SK-N-SH (cell line): ENCODE measurements at regions of chr17 and their contacts with region 1.

Region 1: DNA sequence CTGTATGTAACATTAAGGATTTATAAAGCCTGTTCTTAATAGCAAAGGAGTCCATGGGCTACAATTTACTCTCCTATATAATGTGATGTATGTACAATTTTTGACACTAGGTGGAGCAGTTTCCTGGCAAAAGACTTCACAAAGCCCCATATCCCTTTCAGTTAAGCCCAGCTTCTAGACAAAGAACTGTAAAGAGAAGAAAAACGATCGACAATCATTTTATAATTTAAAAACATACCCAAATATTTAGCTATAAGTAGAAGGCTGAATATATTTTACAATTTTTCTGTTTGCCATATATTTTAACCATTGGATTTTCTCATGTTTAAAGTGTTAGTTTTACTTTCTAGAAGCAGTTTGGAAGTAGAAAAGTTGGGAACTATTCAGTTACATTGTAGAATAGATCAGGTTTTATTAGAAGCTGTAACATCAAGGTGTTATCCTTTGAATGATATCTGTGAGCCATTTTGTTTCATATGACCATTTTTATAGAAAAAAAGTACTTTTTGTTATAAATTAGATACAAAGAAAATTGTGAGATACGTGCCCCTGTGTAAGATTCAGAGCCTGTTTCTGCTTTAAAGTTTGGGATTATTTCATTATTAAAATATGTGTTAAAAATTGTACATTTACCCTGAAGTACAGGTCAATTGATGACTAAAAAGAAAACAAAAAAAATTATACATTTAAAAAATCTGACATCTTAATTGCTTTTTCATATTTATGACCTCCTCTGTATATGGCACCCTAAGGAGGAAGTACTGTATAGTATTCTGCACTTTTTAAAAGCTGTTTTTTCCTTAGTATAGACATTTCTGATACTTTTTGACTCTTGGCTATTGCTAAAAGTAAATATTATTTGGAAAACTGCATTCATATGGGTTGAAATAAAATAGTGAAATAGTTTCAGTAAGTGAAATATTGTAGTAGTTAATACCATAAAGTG is 46.3 kb downstream of the VMP1 start:
- DNase-seq: peak; percentile 78
- H3K4me3 ChIP-seq: peak overlapping the region in 1 of 2 experiments; percentile 40; a peak in 1 of 4 replicates
- H3K27ac ChIP-seq: peak overlapping the region; percentile 91 to 99
- H3K4me1 ChIP-seq: peaks cover 0 to 40% of the 10 kb centered on the region in 2 experiments; a peak in 3 of 4 replicates
- H3K27me3 ChIP-seq: no peaks in the 10 kb centered on the region
- CTCF ChIP-seq: peak; percentile 92
- EP300 ChIP-seq: no peak
- RAD21 ChIP-seq: peak; percentile 98

Region 2: GRCh38 chr17:59521204-59522126 is 232.3 kb before region 1 on chr17:
- CTCF ChIA-PET with region 1: no interaction called
- POLR2A ChIA-PET with region 1: no interaction called
- DNase-seq: peak; percentile 92
- H3K4me3 ChIP-seq: 0 out of 4 replicates have a peak overlapping the region, but pooled peaks of 1 of the 2 experiments have one; percentile 7
- H3K27ac ChIP-seq: peak overlapping the region in 1 of 2 experiments; percentile 70; a peak in 2 of 4 replicates
- H3K4me1 ChIP-seq: peaks cover 0 to 3% of the 10 kb centered on the region in 2 experiments; a peak in 2 of 4 replicates
- H3K27me3 ChIP-seq: no peaks in the 10 kb centered on the region
- CTCF ChIP-seq: peak; percentile 98
- EP300 ChIP-seq: peak in 1 of 2 experiments; percentile 49; a peak in 1 of 4 replicates
- RAD21 ChIP-seq: peak; percentile 98

Region 3: GRCh38 chr17:59699786-59700185 is 54.0 kb before region 1 on chr17:
- CTCF ChIA-PET with region 1: no interaction called
- POLR2A ChIA-PET with region 1: no interaction called
- DNase-seq: no peak
- H3K4me3 ChIP-seq: no peak overlapping the region
- H3K27ac ChIP-seq: no peak overlapping the region; a peak in 1 of 4 replicates
- H3K4me1 ChIP-seq: peaks cover 0 to 9% of the 10 kb centered on the region in 2 experiments; a peak in 2 of 4 replicates
- H3K27me3 ChIP-seq: no peaks in the 10 kb centered on the region
- CTCF ChIP-seq: no peak
- EP300 ChIP-seq: no peak
- RAD21 ChIP-seq: no peak

Region 4: DNA sequence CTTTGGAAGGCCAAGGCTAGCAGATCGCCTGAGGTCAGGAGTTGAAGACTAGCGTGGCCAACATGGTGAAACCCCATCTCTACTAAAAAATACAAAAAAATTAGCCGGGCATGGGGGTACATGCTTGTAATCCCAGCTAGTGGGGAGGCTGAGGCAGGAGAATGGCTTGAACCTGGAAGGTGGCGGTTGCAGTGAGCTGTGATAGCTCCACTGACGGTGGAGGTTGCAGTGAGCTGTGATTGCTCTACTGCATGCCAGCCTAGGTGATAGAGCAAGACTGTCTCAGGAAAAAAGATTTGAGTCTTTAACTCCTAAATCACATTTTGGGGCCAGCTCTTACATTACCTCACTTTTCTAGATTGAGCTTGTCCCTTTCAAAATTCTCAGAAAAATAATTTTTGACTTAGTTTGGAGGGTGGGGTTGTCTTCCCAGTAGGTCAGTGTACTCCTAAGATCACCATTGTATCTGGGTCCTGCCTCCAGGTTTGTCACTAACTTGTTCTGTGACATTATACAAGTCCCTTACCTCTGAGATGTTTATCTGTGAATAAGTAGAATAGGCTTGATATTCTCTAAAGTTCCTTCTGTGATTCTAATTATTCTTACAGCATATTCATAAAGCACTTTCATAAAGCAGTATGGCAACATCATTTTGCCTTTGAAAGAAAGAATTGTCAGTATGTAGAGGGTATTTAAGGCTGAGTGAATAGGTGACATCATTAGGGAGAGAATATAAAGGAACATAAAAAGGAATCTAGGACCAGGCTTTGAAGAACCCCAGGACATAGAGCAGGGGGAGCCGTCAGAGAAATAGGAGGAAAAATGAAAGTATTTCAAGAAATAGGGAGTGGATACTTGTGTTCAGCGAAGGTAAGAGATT is 31.0 kb before region 1 on chr17:
- CTCF ChIA-PET with region 1: interaction called, 11 read pairs
- POLR2A ChIA-PET with region 1: interaction called, 3 read pairs
- DNase-seq: no peak
- H3K4me3 ChIP-seq: no peak overlapping the region
- H3K27ac ChIP-seq: no peak overlapping the region
- H3K4me1 ChIP-seq: peaks cover 0 to 11% of the 10 kb centered on the region in 2 experiments; a peak in 1 of 4 replicates
- H3K27me3 ChIP-seq: no peaks in the 10 kb centered on the region
- CTCF ChIP-seq: no peak
- EP300 ChIP-seq: no peak
- RAD21 ChIP-seq: no peak

Region 5: DNA sequence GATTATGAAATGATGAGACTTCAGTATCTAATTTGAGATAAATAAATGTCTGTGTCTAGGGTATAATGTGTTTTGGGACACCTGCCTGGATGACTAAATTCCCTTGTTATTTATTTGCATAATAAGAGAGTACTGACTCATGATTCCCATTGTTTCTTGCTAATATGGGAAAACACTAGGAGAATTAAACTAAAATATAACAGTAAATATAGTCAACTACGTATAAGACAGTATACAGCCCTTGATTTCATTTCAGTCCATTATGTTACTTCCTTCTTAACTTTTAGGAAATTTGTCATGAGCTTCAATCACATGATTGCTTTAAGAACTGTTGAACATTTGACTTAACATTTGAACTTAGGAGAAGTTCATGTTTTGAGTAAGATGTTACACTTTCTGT is 16.1 kb after region 1 on chr17:
- CTCF ChIA-PET with region 1: interaction called, 18 read pairs
- POLR2A ChIA-PET with region 1: no interaction called
- DNase-seq: no peak
- H3K4me3 ChIP-seq: no peak overlapping the region
- H3K27ac ChIP-seq: peak overlapping the region in 1 of 2 experiments; percentile 76; a peak in 2 of 4 replicates
- H3K4me1 ChIP-seq: peaks cover 0 to 31% of the 10 kb centered on the region in 2 experiments; a peak in 2 of 4 replicates
- H3K27me3 ChIP-seq: no peaks in the 10 kb centered on the region
- CTCF ChIP-seq: no peak
- EP300 ChIP-seq: no peak
- RAD21 ChIP-seq: no peak

Region 6: GRCh38 chr17:59783221-59784047 is 29.6 kb after region 1 on chr17:
- CTCF ChIA-PET with region 1: interaction called, 12 read pairs
- POLR2A ChIA-PET with region 1: no interaction called
- DNase-seq: peak; percentile 73
- H3K4me3 ChIP-seq: peak overlapping the region in 1 of 2 experiments; percentile 4; a peak in 1 of 4 replicates
- H3K27ac ChIP-seq: peak overlapping the region; percentile 97 to 99
- H3K4me1 ChIP-seq: peaks cover 20 to 46% of the 10 kb centered on the region in 2 experiments
- H3K27me3 ChIP-seq: no peaks in the 10 kb centered on the region
- CTCF ChIP-seq: no peak
- EP300 ChIP-seq: peak; percentile 66 to 84; a peak in 3 of 4 replicates
- RAD21 ChIP-seq: peak; percentile 22; the same call in 1 of the 2 replicates

Region 7: GRCh38 chr17:59837308-59838051 is 83.7 kb after region 1 on chr17:
- CTCF ChIA-PET with region 1: interaction called, 25 read pairs
- POLR2A ChIA-PET with region 1: no interaction called
- DNase-seq: no peak
- H3K4me3 ChIP-seq: peak overlapping the region; percentile 53 to 93
- H3K27ac ChIP-seq: peak overlapping the region; percentile 95 to 100
- H3K4me1 ChIP-seq: peaks cover 0 to 17% of the 10 kb centered on the region in 2 experiments; a peak in 2 of 4 replicates
- H3K27me3 ChIP-seq: no peaks in the 10 kb centered on the region
- CTCF ChIP-seq: no peak
- EP300 ChIP-seq: peak in 1 of 2 experiments; percentile 97; a peak in 2 of 4 replicates
- RAD21 ChIP-seq: no peak

Region 8: GRCh38 chr17:59892924-59893676 is 139.3 kb after region 1 on chr17 and contains the starts of genes RPS6KB1 and TUBD1:
- CTCF ChIA-PET with region 1: interaction called, 14 read pairs
- POLR2A ChIA-PET with region 1: no interaction called
- DNase-seq: peak; percentile 99
- H3K4me3 ChIP-seq: peak within 1 kb of the TSS; percentile 70 to 80
- H3K27ac ChIP-seq: peak within 1 kb of the TSS; percentile 58 to 64
- H3K4me1 ChIP-seq: peaks cover 3 to 17% of the 10 kb centered on the region in 2 experiments; a peak in 3 of 4 replicates
- H3K27me3 ChIP-seq: no peaks in the 10 kb centered on the region
- CTCF ChIP-seq: no peak
- EP300 ChIP-seq: no peak
- RAD21 ChIP-seq: no peak
- polyA plus RNA-seq, gene RPS6KB1: 10.0 and 13.4 TPM in 2 replicates
- polyA plus RNA-seq, gene TUBD1: 3.2 and 5.4 TPM in 2 replicates

Region 9: GRCh38 chr17:60036796-60037612 is 283.2 kb after region 1 on chr17:
- CTCF ChIA-PET with region 1: interaction called, 33 read pairs
- POLR2A ChIA-PET with region 1: no interaction called
- DNase-seq: peak; percentile 84
- H3K4me3 ChIP-seq: peak overlapping the region in 1 of 2 experiments; percentile 36; a peak in 1 of 4 replicates
- H3K27ac ChIP-seq: no peak overlapping the region
- H3K4me1 ChIP-seq: peaks cover 0 to 14% of the 10 kb centered on the region in 2 experiments; a peak in 1 of 4 replicates
- H3K27me3 ChIP-seq: no peaks in the 10 kb centered on the region
- CTCF ChIP-seq: peak; percentile 100
- EP300 ChIP-seq: no peak
- RAD21 ChIP-seq: peak; percentile 60